ENCODE measurements at regions of chr5 and their contacts with region 1.

Region 1: GRCh38 chr5:8813180-8813579 is 732.7 kb downstream of the SEMA5A start:
- DNase-seq: no peak
- H3K4me3 ChIP-seq: no peak overlapping the region
- H3K27ac ChIP-seq: no peak overlapping the region
- H3K4me1 ChIP-seq: no peaks in the 10 kb centered on the region
- H3K27me3 ChIP-seq: no peaks in the 10 kb centered on the region
- CTCF ChIP-seq: no peak
- POLR2A ChIP-seq: no peak

Region 2: DNA sequence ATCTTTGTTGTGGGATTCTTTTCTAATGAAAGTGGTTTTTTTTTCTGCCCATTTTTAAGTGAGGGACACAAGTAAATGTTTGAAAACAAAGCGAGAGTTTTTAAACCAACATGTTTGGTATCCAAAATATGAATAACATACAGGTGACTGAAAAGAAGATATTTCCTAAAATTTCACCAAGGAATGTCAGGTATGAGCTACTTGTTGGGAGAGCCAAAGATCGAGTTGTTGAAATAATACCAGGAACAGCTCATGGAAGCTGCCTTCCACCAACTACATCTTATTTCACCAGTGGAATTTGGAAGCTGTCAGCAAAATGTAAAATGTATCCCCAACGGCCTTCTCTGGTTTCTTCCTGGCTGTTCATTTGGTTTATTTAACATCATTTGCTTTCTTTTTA is 1645.0 kb before region 1 on chr5:
- intact Hi-C with region 1: no loop called
- DNase-seq: no peak
- H3K4me3 ChIP-seq: no peak overlapping the region
- H3K27ac ChIP-seq: no peak overlapping the region
- H3K4me1 ChIP-seq: no peaks in the 10 kb centered on the region
- H3K27me3 ChIP-seq: no peaks in the 10 kb centered on the region
- CTCF ChIP-seq: no peak
- POLR2A ChIP-seq: no peak

Region 3: DNA sequence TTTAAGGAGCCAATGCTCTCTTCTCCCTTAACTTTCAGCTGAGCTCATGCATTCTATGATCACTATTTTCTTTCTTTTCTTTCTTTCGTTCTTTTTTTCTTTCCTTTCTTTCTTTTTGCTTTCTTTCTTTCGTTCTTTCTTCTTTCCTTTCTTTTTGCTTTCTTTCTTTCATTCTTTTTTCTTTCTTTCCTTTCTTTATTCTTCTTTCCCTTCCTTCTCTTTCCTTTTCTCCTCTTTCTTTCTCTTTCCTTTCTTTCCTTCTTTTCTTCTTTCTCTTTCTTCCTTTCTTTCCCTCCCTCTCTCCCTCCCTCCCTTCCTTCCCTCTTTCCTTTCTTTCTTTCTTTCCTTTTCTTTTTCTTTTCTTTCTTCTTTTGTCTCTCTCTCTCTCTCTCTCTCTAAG is 28.5 kb before region 1 on chr5:
- intact Hi-C with region 1: loop called (anchors 5 kb)
- DNase-seq: no peak
- H3K4me3 ChIP-seq: no peak overlapping the region
- H3K27ac ChIP-seq: no peak overlapping the region
- H3K4me1 ChIP-seq: no peaks in the 10 kb centered on the region
- H3K27me3 ChIP-seq: no peaks in the 10 kb centered on the region
- CTCF ChIP-seq: no peak
- POLR2A ChIP-seq: no peak

Region 4: GRCh38 chr5:8796368-8796767 is 16.8 kb before region 1 on chr5:
- intact Hi-C with region 1: no loop called
- DNase-seq: no peak
- H3K4me3 ChIP-seq: no peak overlapping the region
- H3K27ac ChIP-seq: no peak overlapping the region
- H3K4me1 ChIP-seq: no peaks in the 10 kb centered on the region
- H3K27me3 ChIP-seq: no peaks in the 10 kb centered on the region
- CTCF ChIP-seq: no peak
- POLR2A ChIP-seq: no peak

Measured in vagina (tissue), 2 donors.